Naive thymus-derived CD4-positive, alpha-beta T cell (primary cell): ENCODE measurements at regions of chr2 and their contacts with region 1.

Region 1: GRCh38 chr2:70132244-70133126 is 45.2 kb downstream of the PCBP1 start:
- DNase-seq: peak in 7 of 9 donors; percentile 63 to 77 (median 68)
- ATAC-seq: peak; percentile 66
- H3K4me3 ChIP-seq: peak overlapping the region; percentile 53
- H3K4me3 Mint-ChIP-seq: peak overlapping the region; percentile 81 to 94 (median 90)
- H3K27ac ChIP-seq: peak overlapping the region; percentile 85
- H3K27ac Mint-ChIP-seq: peak overlapping the region; percentile 95 to 99 (median 97)
- H3K4me1 ChIP-seq: peaks cover 66 to 74% of the 10 kb centered on the region in 2 donors
- H3K4me1 Mint-ChIP-seq: peaks cover 58 to 88% (median 79%) of the 10 kb centered on the region in 7 donors
- H3K27me3 ChIP-seq: no peaks in the 10 kb centered on the region
- H3K27me3 Mint-ChIP-seq: no peaks in the 10 kb centered on the region

Region 2: DNA sequence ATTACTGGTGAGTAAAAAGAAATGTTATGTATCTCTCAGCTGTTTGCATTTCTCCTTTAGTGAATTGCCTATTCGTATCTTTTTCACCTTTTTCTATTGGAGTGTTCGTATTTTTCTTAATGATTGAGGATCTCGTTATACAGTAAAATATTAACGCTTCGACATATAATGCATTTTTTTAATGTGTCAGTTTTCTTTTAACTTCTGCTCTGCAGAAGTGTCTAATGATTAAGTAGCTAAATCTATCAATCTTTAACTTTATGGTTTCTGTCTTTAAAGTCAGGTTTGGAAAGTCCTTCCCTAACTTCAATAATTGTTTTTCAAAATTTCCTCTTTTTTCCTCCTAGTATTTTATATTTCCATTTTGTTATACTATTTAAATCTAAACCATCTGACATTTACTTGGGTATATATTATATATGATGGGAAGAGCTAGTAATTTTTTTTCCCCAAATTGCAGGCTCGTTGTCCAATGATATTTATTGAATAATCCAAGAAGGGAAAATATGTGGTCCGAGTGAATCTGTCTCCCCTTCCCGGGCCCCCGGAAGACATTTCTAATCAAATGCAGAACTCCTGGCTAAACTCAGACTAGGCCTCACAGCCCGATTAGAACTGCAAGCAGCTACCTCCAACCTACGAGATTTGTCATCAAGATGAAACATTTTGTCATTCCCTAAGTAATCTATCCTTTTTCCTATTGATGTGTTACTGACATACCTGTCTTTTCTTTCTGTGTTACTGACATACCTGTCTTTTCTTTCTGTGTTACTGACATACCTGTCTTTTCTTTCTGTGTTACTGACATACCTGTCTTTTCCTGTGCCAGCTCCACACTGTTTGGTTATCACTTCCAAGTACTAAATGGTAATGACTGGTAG is 28.0 kb before region 1 on chr2:
- CTCF ChIA-PET with region 1: interaction called, 3 read pairs
- POLR2A ChIA-PET with region 1: interaction called, 356 read pairs
- intact Hi-C with region 1: loop called in 1 of 2 experiments (anchors 2 kb)
- DNase-seq: peak in 4 of 9 donors; percentile 35 to 47 (median 46)
- ATAC-seq: no peak
- H3K4me3 ChIP-seq: peak overlapping the region; percentile 35
- H3K4me3 Mint-ChIP-seq: peak overlapping the region; percentile 60 to 87 (median 82)
- H3K27ac ChIP-seq: peak overlapping the region; percentile 72
- H3K27ac Mint-ChIP-seq: peak overlapping the region; percentile 88 to 97 (median 93)
- H3K4me1 ChIP-seq: peaks cover 37 to 45% of the 10 kb centered on the region in 2 donors
- H3K4me1 Mint-ChIP-seq: peaks cover 34 to 58% (median 55%) of the 10 kb centered on the region in 7 donors
- H3K27me3 ChIP-seq: no peaks in the 10 kb centered on the region
- H3K27me3 Mint-ChIP-seq: no peaks in the 10 kb centered on the region

Region 3: GRCh38 chr2:70115646-70116442 is 16.6 kb before region 1 on chr2:
- CTCF ChIA-PET with region 1: no interaction called
- POLR2A ChIA-PET with region 1: interaction called, 570 read pairs
- intact Hi-C with region 1: no loop called
- DNase-seq: no peak
- ATAC-seq: peak; percentile 46
- H3K4me3 ChIP-seq: no peak overlapping the region
- H3K4me3 Mint-ChIP-seq: peak overlapping the region in 7 of 10 donors; percentile 16 to 57 (median 36)
- H3K27ac ChIP-seq: peak overlapping the region; percentile 0
- H3K27ac Mint-ChIP-seq: peak overlapping the region in 6 of 9 donors; percentile 9 to 82 (median 52)
- H3K4me1 ChIP-seq: peaks cover 14 to 33% of the 10 kb centered on the region in 2 donors
- H3K4me1 Mint-ChIP-seq: peaks cover 34 to 75% (median 65%) of the 10 kb centered on the region in 7 donors
- H3K27me3 ChIP-seq: no peaks in the 10 kb centered on the region
- H3K27me3 Mint-ChIP-seq: no peaks in the 10 kb centered on the region